ENCODE measurements at regions of chr1 and their contacts with region 1.

Region 1: GRCh38 chr1:23322770-23323169 is 21.3 kb downstream of the HNRNPR start:
- DNase-seq: no peak
- ATAC-seq: no peak
- H3K4me3 ChIP-seq: no peak overlapping the region
- H3K27ac ChIP-seq: no peak overlapping the region
- H3K4me1 ChIP-seq: no peaks in the 10 kb centered on the region
- H3K27me3 ChIP-seq: no peaks in the 10 kb centered on the region
- CTCF ChIP-seq: no peak
- EP300 ChIP-seq: no peak
- POLR2A ChIP-seq: no peak
- RAD21 ChIP-seq: no peak

Region 2: GRCh38 chr1:23303524-23303923 is 19.2 kb before region 1 on chr1:
- CTCF ChIA-PET with region 1: no interaction called
- POLR2A ChIA-PET with region 1: interaction called, 13 read pairs
- in situ Hi-C with region 1: no loop called
- intact Hi-C with region 1: no loop called
- DNase-seq: no peak
- ATAC-seq: no peak
- H3K4me3 ChIP-seq: no peak overlapping the region
- H3K27ac ChIP-seq: no peak overlapping the region
- H3K4me1 ChIP-seq: no peaks in the 10 kb centered on the region
- H3K27me3 ChIP-seq: no peaks in the 10 kb centered on the region
- CTCF ChIP-seq: no peak
- EP300 ChIP-seq: no peak
- POLR2A ChIP-seq: no peak
- RAD21 ChIP-seq: no peak

Region 3: DNA sequence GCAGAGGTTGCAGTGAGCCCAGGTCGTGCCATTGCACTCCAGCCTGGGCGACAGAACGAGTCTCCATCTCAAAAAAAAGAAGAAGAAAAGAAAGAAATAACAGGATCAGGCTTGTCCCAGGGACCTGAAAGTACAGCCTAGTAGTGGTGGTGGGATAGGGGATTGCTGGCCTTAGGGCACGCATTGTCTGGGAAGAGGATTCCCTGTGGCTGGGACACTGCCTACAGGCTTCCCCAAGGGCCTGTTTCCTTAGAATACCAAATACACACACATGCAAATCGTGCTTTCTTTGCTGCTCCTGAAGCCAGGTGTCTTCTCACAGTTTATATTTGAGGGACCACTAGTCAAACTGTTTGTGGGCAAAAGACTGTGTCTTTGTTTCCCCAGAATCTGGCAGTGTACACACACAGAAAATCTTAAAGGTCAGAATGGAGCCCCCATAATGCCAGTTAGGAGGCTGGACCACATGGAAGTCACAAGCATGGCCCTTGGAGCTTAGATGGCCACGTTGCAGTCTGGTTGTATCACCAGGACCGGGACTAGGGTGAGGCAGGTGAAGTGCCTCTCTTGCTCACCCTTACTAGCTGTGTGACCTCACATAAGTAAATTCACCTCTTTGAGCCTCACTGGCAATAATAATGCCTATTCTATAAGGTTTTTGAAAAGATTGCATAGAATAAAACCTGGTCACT is 173.9 kb after region 1 on chr1:
- CTCF ChIA-PET with region 1: no interaction called
- POLR2A ChIA-PET with region 1: no interaction called
- in situ Hi-C with region 1: no loop called
- intact Hi-C with region 1: no loop called
- DNase-seq: no peak
- ATAC-seq: peak; percentile 46
- H3K4me3 ChIP-seq: no peak overlapping the region
- H3K27ac ChIP-seq: no peak overlapping the region
- H3K4me1 ChIP-seq: peaks cover 0 to 4% of the 10 kb centered on the region in 2 experiments; a peak in 1 of 5 replicates
- H3K27me3 ChIP-seq: no peaks in the 10 kb centered on the region
- CTCF ChIP-seq: no peak
- EP300 ChIP-seq: no peak
- POLR2A ChIP-seq: no peak
- RAD21 ChIP-seq: no peak

Measured in K562 (cell line).